HEK293 (cell line): ENCODE measurements at regions of chr22 and their contacts with region 1.

Region 1: GRCh38 chr22:26679003-26679629 is 21.7 kb downstream of the MIAT start:
- H3K4me3 ChIP-seq: no peak overlapping the region
- H3K27ac ChIP-seq: no peak overlapping the region
- H3K4me1 ChIP-seq: no peaks in the 10 kb centered on the region
- CTCF ChIP-seq: peak; percentile 66; the same call in 1 of the 2 replicates

Region 2: DNA sequence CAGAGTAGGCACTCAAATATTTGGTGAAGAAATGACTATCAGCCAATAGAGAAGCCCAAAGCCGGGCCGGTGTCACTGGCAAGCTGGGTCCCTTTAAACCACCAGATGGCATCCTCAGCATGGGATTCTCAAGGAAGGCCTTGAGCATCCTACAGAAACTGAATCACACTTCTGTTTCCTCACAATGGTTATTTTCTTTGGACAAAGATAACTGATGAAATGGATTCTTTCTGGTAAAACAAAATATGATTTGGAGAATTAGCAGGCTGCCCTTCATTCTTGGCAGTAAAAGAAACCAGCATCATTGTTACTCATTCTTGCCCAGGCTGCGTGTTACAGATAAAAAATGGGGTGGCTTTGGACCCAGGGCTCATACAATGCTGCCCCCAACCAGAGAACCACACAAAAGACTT is 280.4 kb before region 1 on chr22:
- CTCF ChIA-PET with region 1: interaction called, 11 read pairs
- POLR2A ChIA-PET with region 1: no interaction called
- H3K4me3 ChIP-seq: no peak overlapping the region
- H3K27ac ChIP-seq: no peak overlapping the region
- H3K4me1 ChIP-seq: no peaks in the 10 kb centered on the region
- CTCF ChIP-seq: peak; percentile 61; the same call in 1 of the 2 replicates

Region 3: DNA sequence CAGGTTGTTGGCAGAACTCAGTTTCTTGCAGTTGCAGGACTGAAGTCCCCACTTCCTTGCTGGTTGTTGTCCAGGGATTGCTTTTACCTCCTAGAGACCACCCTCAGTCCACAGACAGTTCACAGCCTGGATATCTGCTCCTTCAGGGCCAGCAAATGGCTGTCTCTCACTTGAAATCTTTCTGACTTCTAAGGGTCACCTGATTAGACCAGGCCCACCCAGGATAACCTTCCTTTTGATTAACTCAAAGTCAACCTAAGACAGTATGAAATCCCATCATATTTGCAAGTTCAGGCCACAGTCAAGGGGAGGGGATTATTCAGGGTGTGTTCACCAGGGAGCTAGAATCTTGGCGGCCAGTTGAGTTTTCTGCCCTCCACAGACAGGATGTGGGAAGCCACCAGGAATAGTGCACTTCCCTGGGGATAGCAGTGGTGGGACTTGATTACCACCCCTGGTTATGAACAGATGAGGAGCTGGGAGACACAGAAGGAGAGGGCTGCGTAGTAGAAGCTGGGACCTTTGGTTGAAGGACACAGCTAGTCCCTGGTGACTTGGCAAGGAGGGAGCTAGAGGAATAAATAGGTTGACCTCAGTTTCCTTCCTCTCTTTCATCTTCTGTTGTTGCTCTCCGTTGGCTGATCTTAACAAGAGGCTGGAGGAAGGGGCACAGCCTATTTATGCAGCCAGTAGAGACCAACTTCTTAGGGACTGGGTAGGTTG is 11.7 kb after region 1 on chr22:
- CTCF ChIA-PET with region 1: interaction called, 16 read pairs
- POLR2A ChIA-PET with region 1: no interaction called
- H3K4me3 ChIP-seq: no peak overlapping the region
- H3K27ac ChIP-seq: no peak overlapping the region
- H3K4me1 ChIP-seq: no peaks in the 10 kb centered on the region
- CTCF ChIP-seq: no peak

Region 4: GRCh38 chr22:26718905-26719304 is 39.8 kb after region 1 on chr22:
- CTCF ChIA-PET with region 1: interaction called, 10 read pairs
- POLR2A ChIA-PET with region 1: no interaction called
- H3K4me3 ChIP-seq: no peak overlapping the region
- H3K27ac ChIP-seq: no peak overlapping the region
- H3K4me1 ChIP-seq: no peaks in the 10 kb centered on the region
- CTCF ChIP-seq: no peak